ENCODE measurements at regions of chr12 and their contacts with region 1.

Region 1: DNA sequence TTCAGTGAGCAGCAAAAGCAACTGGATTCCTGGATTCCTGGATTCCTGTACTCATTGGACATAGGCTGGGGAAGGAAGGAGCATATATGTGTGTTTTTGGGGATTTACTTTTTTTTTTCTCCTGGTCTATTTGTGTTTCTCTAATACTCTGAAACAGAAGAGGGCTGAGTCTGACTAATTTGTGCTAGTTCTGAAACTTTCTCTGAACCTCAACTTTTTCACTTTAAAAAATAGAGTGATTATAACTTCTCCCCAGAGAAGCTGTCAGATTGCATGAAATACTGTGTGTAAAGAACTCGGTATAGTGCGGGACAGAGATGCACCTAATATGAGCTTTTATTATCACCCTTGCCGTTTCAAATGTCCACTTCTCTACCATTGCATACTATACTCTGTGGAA is 529.5 kb downstream of the TMTC2 start:
- DNase-seq: no peak
- H3K4me3 ChIP-seq: no peak overlapping the region
- H3K27ac ChIP-seq: no peak overlapping the region
- H3K4me1 ChIP-seq: no peaks in the 10 kb centered on the region
- H3K27me3 ChIP-seq: peaks cover 2% of the 10 kb centered on the region
- CTCF ChIP-seq: no peak

Region 2: DNA sequence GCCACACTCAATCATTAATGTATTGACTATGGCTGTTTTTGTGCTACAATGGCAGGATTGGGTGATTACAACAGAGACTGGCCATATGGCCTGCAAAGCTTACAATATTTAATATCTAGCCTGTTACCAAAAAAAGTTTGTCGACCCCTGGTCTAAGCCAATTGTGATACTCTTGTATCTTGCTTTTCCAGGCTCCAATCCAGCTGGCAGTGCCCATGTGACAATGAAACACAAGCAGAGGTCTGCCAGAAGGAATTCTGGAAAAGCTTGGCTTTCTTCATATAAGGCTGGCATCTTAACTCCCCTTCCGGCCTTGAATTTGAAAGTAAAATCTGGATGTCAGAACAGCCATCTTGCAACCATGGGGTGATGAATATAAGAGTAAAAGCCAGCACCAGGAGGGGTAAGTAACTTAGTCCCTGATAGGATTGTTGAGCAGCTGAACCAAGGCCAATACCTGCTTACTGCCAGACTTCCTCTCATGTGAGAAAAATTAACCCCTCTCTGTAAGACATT is 70.8 kb before region 1 on chr12:
- CTCF ChIA-PET with region 1: no interaction called
- dilution Hi-C with region 1: loop called (anchors 5 kb)
- in situ Hi-C with region 1: no loop called
- intact Hi-C with region 1: no loop called
- DNase-seq: no peak
- H3K4me3 ChIP-seq: no peak overlapping the region
- H3K27ac ChIP-seq: no peak overlapping the region
- H3K4me1 ChIP-seq: no peaks in the 10 kb centered on the region
- H3K27me3 ChIP-seq: no peaks in the 10 kb centered on the region
- CTCF ChIP-seq: no peak

Region 3: GRCh38 chr12:83256562-83256961 is 40.3 kb after region 1 on chr12:
- CTCF ChIA-PET with region 1: no interaction called
- dilution Hi-C with region 1: no loop called
- in situ Hi-C with region 1: no loop called
- intact Hi-C with region 1: no loop called
- DNase-seq: no peak
- H3K4me3 ChIP-seq: no peak overlapping the region
- H3K27ac ChIP-seq: no peak overlapping the region
- H3K4me1 ChIP-seq: no peaks in the 10 kb centered on the region
- H3K27me3 ChIP-seq: no peaks in the 10 kb centered on the region
- CTCF ChIP-seq: no peak